GM12878 (cell line): ENCODE measurements at regions of chr2 and their contacts with region 1.

Region 1: GRCh38 chr2:230913406-230914143 is 11.5 kb downstream of the GPR55 start:
- DNase-seq: no peak
- ATAC-seq: peak; percentile 75
- H3K4me3 ChIP-seq: no peak overlapping the region
- H3K27ac ChIP-seq: peak overlapping the region; percentile 13; the same call in 1 of the 2 replicates
- H3K4me1 ChIP-seq: peaks cover 23% of the 10 kb centered on the region
- H3K27me3 ChIP-seq: no peaks in the 10 kb centered on the region
- CTCF ChIP-seq: peak; percentile 45 to 61 (median 60)
- EP300 ChIP-seq: no peak
- POLR2A ChIP-seq: no peak
- RAD21 ChIP-seq: peak; percentile 62

Region 2: GRCh38 chr2:230496891-230497290 is 416.7 kb before region 1 on chr2:
- CTCF ChIA-PET with region 1: no interaction called
- POLR2A ChIA-PET with region 1: no interaction called
- RAD21 ChIA-PET with region 1: no interaction called
- SMC1A ChIA-PET with region 1: no interaction called
- in situ Hi-C with region 1: no loop called
- intact Hi-C with region 1: no loop called
- DNase-seq: no peak
- ATAC-seq: peak; percentile 41
- H3K4me3 ChIP-seq: no peak overlapping the region
- H3K27ac ChIP-seq: peak overlapping the region; percentile 23; the same call in 1 of the 2 replicates
- H3K4me1 ChIP-seq: peaks cover 10% of the 10 kb centered on the region; the same call in 1 of the 2 replicates
- H3K27me3 ChIP-seq: no peaks in the 10 kb centered on the region
- CTCF ChIP-seq: no peak
- EP300 ChIP-seq: no peak
- POLR2A ChIP-seq: no peak
- RAD21 ChIP-seq: no peak

Region 3: GRCh38 chr2:230893841-230894781 is 19.5 kb before region 1 on chr2:
- CTCF ChIA-PET with region 1: interaction called, 122 read pairs
- POLR2A ChIA-PET with region 1: interaction called, 3 read pairs
- RAD21 ChIA-PET with region 1: no interaction called
- SMC1A ChIA-PET with region 1: interaction called, 5 read pairs
- in situ Hi-C with region 1: no loop called
- intact Hi-C with region 1: no loop called
- DNase-seq: no peak
- ATAC-seq: peak; percentile 71
- H3K4me3 ChIP-seq: no peak overlapping the region
- H3K27ac ChIP-seq: 0 out of 2 replicates have a peak overlapping the region, but pooled peaks have one; percentile 7
- H3K4me1 ChIP-seq: peaks cover 39% of the 10 kb centered on the region
- H3K27me3 ChIP-seq: no peaks in the 10 kb centered on the region
- CTCF ChIP-seq: no peak
- EP300 ChIP-seq: no peak; a peak in 1 of 4 replicates
- POLR2A ChIP-seq: no peak
- RAD21 ChIP-seq: no peak

Region 4: GRCh38 chr2:230902180-230902899 is 11.2 kb before region 1 on chr2:
- CTCF ChIA-PET with region 1: interaction called, 122 read pairs
- POLR2A ChIA-PET with region 1: interaction called, 3 read pairs
- RAD21 ChIA-PET with region 1: interaction called, 8 read pairs
- SMC1A ChIA-PET with region 1: interaction called, 18 read pairs
- in situ Hi-C with region 1: no loop called
- intact Hi-C with region 1: no loop called
- DNase-seq: no peak
- ATAC-seq: peak; percentile 94
- H3K4me3 ChIP-seq: no peak overlapping the region
- H3K27ac ChIP-seq: no peak overlapping the region
- H3K4me1 ChIP-seq: peaks cover 14% of the 10 kb centered on the region
- H3K27me3 ChIP-seq: no peaks in the 10 kb centered on the region
- CTCF ChIP-seq: peak; percentile 98 to 99 (median 98); a peak in 5 of 6 replicates
- EP300 ChIP-seq: no peak
- POLR2A ChIP-seq: no peak
- RAD21 ChIP-seq: peak; percentile 99